Left cardiac atrium (tissue), 4 donors: ENCODE measurements at regions of chr6 and their contacts with region 1.

Region 1: GRCh38 chr6:56279346-56280080 is 32.1 kb upstream of the COL21A1 start:
- DNase-seq: no peak
- ATAC-seq: no peak

Region 2: GRCh38 chr6:56168596-56168995 is 110.9 kb before region 1 on chr6:
- intact Hi-C with region 1: loop called in 1 of 2 experiments (anchors 10 kb)
- DNase-seq: no peak
- ATAC-seq: no peak

Region 3: DNA sequence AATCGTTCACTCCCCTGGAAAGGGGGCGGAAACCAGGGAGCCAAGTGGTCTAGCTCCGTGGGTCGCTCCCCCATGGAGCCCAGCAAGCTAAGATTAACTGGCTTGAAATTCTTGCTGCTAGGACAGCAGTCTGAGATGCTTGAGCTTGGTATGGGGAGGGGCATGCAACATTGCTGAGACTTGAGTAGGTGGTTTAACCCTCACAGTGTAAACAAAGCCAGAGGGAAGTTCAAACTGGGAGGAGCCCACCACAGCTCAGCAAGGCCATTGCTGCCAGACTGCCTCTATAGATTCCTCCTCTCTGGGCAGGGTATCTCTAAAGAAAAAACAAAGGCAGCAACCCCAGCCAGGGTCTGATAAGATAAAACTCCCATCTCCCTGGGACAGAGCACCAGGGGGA is 75.4 kb before region 1 on chr6:
- intact Hi-C with region 1: no loop called
- DNase-seq: no peak
- ATAC-seq: no peak

Region 4: GRCh38 chr6:56370561-56371211 is 91.2 kb after region 1 on chr6:
- intact Hi-C with region 1: no loop called
- DNase-seq: peak; percentile 33
- ATAC-seq: peak; percentile 60 to 76